Activated CD4-positive, alpha-beta T cell treated with anti-CD3 and anti-CD28 coated beads, Interleukin-2, amount 10 ng/mL, durations not matched to agents 24 days and 14 days (primary cell): ENCODE measurements at regions of chr19 and their contacts with region 1.

Region 1: DNA sequence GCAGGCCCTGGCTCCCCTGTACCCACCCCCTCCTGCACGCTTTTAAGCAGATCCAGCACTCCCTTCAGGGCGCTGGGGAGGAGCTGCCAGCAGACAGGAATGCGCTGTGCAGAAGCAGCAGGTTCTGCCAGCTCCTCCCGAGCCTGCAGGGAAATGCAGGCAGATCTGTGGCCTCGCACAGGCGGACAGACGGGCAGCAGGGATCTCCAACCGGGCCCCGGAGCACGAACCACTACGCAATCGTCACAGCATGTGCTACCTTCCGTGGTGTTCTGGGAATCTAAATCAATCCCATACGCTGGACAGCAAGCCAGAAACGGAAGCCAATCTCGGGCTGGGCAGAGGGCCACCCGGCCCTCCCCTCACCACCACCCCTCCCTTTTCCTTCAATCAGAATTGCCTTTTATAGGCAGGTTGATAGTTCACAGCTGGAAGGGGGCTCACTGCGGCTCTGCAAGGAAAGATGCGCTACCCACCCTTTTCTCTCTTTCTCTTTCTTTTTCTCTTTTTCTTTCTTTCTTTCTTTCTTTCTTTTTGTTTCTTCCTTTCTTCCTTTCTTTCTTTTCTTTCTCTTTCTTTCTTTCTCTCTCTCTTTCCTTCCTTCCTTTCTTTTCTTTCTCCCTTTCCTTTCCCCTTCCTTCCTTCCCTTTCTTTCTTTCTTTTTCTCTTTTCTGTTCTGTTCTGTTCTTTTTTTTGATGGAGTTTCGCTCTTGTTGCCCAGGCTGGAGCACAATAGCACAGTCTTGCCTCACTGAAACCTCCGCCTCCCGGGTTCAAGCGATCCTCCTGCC is 99.9 kb downstream of the GNG7 start:
- DNase-seq: no peak
- H3K4me3 Mint-ChIP-seq: no peak overlapping the region
- H3K27ac Mint-ChIP-seq: no peak overlapping the region
- H3K4me1 Mint-ChIP-seq: peaks cover 16% of the 10 kb centered on the region
- H3K27me3 Mint-ChIP-seq: peaks cover 17% of the 10 kb centered on the region

Region 2: GRCh38 chr19:2461751-2462634 is 140.6 kb before region 1 on chr19:
- intact Hi-C with region 1: no loop called
- DNase-seq: peak; percentile 94
- H3K4me3 Mint-ChIP-seq: peak overlapping the region; percentile 97
- H3K27ac Mint-ChIP-seq: peak overlapping the region; percentile 95
- H3K4me1 Mint-ChIP-seq: peaks cover 22% of the 10 kb centered on the region
- H3K27me3 Mint-ChIP-seq: no peaks in the 10 kb centered on the region

Region 3: GRCh38 chr19:2552859-2553258 is 49.7 kb before region 1 on chr19:
- intact Hi-C with region 1: loop called (anchors 2 kb)
- DNase-seq: peak; percentile 92
- H3K4me3 Mint-ChIP-seq: peak overlapping the region; percentile 72
- H3K27ac Mint-ChIP-seq: peak overlapping the region; percentile 78
- H3K4me1 Mint-ChIP-seq: peaks cover 31% of the 10 kb centered on the region
- H3K27me3 Mint-ChIP-seq: peaks cover 4% of the 10 kb centered on the region

Region 4: GRCh38 chr19:2618611-2619010 is 16.0 kb after region 1 on chr19:
- intact Hi-C with region 1: loop called (anchors 2 kb)
- DNase-seq: peak; percentile 82
- H3K4me3 Mint-ChIP-seq: peak overlapping the region; percentile 63
- H3K27ac Mint-ChIP-seq: peak overlapping the region; percentile 97
- H3K4me1 Mint-ChIP-seq: peaks cover 55% of the 10 kb centered on the region
- H3K27me3 Mint-ChIP-seq: no peaks in the 10 kb centered on the region